MCF 10A (cell line): ENCODE measurements at regions of chr3 and their contacts with region 1.

Region 1: DNA sequence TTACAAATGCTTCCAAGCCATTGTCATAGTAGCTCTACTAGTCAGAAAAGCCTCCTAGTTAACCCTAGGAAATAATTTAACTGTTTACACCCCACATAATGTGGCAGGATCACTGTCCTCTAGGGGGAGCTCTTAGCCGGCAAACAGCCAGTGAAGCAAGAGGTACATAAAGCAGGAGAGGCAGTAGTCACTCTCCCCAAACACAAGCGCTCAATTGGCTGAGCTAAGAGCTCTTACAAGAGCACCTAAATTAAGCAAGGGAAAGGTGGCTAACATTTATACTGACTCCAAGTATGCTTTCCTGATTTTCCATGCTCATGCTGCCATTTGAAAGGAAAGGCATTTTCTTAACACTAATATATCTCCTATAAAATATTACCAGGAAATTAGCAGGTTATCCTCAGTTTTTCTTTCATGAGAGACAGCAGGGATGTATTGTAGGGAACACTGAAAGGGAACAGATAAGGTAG is 37.6 kb downstream of the NCEH1 start:
- DNase-seq: peak; percentile 92
- H3K4me3 Mint-ChIP-seq: no peak overlapping the region
- H3K27ac Mint-ChIP-seq: peak overlapping the region; percentile 39
- H3K4me1 Mint-ChIP-seq: peaks cover 17% of the 10 kb centered on the region
- H3K27me3 Mint-ChIP-seq: no peaks in the 10 kb centered on the region
- CTCF ChIP-seq: peak; percentile 83

Region 2: GRCh38 chr3:172646439-172647015 is 26.7 kb before region 1 on chr3:
- CTCF ChIA-PET with region 1: interaction called, 13 read pairs
- POLR2A ChIA-PET with region 1: no interaction called
- intact Hi-C with region 1: no loop called
- DNase-seq: peak; percentile 96
- H3K4me3 Mint-ChIP-seq: no peak overlapping the region
- H3K27ac Mint-ChIP-seq: no peak overlapping the region
- H3K4me1 Mint-ChIP-seq: peaks cover 8% of the 10 kb centered on the region
- H3K27me3 Mint-ChIP-seq: no peaks in the 10 kb centered on the region
- CTCF ChIP-seq: no peak

Region 3: DNA sequence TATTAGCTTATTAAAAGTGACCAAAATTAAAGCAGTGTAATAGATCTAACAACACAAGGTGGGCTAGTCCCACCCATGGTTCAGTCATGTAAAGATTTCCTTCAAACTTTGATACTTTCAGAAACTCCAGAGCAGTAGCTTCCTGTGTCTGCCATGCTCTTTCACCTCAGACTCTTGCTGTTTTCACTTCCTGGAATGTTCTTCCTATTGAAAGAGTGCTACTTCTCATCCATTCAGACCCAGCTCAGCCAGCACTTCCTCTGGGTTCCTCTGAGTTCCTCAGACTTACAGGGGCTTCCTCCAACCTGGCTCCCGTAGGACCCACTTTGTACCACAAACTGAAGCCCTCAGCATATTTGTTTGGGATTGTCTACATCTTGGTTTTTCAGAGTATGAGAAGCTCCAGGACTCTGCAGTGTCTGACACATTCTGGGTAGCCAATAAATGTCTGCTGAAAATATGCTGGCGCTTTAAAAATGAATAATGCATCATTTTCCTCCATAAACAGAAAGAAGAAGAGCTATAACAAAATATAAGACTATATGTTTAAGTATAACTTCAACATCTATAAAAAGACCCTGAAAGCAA is 19.6 kb after region 1 on chr3:
- CTCF ChIA-PET with region 1: interaction called, 53 read pairs
- POLR2A ChIA-PET with region 1: interaction called, 6 read pairs
- intact Hi-C with region 1: no loop called
- DNase-seq: no peak
- H3K4me3 Mint-ChIP-seq: no peak overlapping the region
- H3K27ac Mint-ChIP-seq: no peak overlapping the region
- H3K4me1 Mint-ChIP-seq: peaks cover 7% of the 10 kb centered on the region
- H3K27me3 Mint-ChIP-seq: no peaks in the 10 kb centered on the region
- CTCF ChIP-seq: no peak

Region 4: DNA sequence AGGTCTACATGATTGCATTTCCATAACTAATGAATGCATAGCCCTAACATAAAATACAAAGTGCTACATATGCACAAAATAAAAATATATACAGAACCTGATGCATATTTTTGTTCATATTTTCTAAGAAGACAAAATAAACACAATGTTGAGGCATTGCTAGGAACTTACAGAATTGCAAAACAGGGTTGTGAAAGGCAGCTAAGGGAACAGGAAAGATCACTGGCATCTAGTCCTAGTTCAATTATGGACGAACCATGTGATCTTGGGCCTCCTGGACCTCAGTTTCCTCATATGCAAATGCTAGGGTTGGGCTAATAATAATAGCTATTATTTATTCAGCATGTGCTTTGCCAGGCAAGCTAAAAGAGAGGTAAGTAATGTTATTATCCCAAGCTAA is 53.1 kb after region 1 on chr3:
- CTCF ChIA-PET with region 1: interaction called, 35 read pairs
- POLR2A ChIA-PET with region 1: no interaction called
- intact Hi-C with region 1: no loop called
- DNase-seq: no peak
- H3K4me3 Mint-ChIP-seq: no peak overlapping the region
- H3K27ac Mint-ChIP-seq: no peak overlapping the region
- H3K4me1 Mint-ChIP-seq: no peaks in the 10 kb centered on the region
- H3K27me3 Mint-ChIP-seq: no peaks in the 10 kb centered on the region
- CTCF ChIP-seq: no peak

Region 5: DNA sequence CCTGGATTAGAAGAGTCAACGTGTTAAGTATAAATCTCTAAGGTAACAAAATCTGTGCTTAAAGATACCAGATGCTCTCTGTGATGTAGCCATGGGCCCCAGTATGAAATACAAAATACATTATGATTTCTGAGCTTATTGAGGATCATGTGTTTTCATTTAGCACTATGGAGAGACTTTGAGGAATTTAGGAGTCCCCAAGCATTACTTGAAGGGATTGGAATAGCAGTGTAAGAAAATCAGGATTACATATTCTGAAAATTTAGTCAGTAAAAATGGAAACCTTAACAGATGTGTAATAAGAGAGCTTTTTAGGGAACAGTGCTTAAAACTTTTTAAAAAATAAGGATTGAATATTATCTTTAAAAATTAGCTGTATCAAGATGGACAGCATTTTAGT is 112.8 kb after region 1 on chr3:
- CTCF ChIA-PET with region 1: no interaction called
- POLR2A ChIA-PET with region 1: no interaction called
- intact Hi-C with region 1: no loop called
- DNase-seq: no peak
- H3K4me3 Mint-ChIP-seq: no peak overlapping the region
- H3K27ac Mint-ChIP-seq: no peak overlapping the region
- H3K4me1 Mint-ChIP-seq: peaks cover 5% of the 10 kb centered on the region
- H3K27me3 Mint-ChIP-seq: no peaks in the 10 kb centered on the region
- CTCF ChIP-seq: no peak

Region 6: DNA sequence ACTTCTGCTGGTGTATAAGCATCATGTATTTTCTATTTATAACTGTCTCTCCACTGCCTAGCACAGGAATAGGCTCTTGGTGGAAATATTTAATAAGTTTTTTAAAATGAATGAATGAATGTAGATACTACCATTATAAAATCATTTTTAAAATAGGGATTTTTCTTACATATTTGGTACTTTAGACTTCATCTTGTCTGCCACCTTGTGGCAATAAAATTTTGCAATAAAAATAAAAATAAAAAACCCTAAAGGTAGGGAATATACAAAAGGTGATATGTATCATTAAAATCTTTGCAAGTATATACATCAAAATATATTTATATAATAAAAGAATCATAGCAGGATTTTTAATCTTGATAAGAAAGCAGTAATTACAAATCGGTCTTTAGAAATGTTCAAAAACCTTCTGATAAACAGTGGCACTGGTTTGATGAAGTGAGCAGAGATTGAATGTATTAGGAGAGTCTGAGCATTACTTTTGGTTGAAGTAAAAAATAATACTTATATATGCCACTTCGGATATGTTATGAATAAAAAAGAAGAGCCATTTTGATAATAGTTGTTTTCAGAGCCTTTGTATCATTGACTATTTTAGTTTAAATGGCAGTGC is 372.6 kb after region 1 on chr3:
- CTCF ChIA-PET with region 1: interaction called, 5 read pairs
- POLR2A ChIA-PET with region 1: no interaction called
- intact Hi-C with region 1: loop called (anchors 2 kb)
- DNase-seq: no peak
- H3K4me3 Mint-ChIP-seq: no peak overlapping the region
- H3K27ac Mint-ChIP-seq: no peak overlapping the region
- H3K4me1 Mint-ChIP-seq: no peaks in the 10 kb centered on the region
- H3K27me3 Mint-ChIP-seq: peaks cover 50% of the 10 kb centered on the region
- CTCF ChIP-seq: peak; percentile 27